ENCODE measurements at regions of chr3 and their contacts with region 1.

Region 1: DNA sequence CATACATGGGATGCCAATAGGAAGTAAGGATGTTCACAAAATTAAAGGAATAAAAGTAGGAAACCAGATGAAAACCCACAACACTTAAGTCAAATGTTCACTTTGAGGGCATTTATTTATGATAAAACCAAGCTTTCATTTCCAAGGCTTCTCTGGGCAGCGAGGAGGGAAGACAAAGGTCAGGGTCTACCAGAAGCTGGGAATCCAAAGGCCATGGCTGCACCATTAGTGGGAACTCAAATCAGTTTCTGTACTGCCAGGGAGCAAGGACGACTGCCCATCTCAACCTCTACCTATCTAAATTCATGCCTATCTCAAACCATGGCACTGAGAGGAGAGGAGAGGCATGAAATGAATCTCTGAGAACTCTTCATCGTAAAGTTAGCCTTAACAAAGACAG is 22.6 kb downstream of the PBRM1 start:
- DNase-seq: peak in 1 of 7 donors; percentile 40
- H3K4me3 ChIP-seq: no peak overlapping the region
- H3K27ac ChIP-seq: peak overlapping the region in 1 of 5 donors; percentile 11
- H3K4me1 ChIP-seq: peaks cover 5 to 8% of the 10 kb centered on the region in 2 donors
- H3K27me3 ChIP-seq: no peaks in the 10 kb centered on the region
- CTCF ChIP-seq: no peak
- POLR2A ChIP-seq: no peak

Region 2: DNA sequence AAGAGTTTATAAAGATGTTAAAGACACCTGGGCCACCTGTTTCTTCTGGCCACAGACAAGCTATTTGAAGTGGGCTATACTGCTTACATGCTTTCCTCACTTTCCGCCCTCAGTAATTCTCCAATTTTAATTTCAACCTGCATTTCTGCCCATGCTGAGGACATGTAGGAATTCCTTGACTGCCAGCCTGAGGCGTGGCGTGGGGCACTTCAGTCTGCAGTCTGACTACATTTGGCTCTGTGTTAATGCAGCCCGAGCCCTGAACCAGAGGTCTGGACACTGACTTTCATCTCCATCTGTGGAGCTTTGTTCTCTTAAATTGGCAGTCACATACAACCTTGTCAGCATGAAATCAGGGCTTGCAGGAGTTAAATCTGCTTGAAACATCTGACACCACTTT is 118.2 kb before region 1 on chr3:
- intact Hi-C with region 1: loop called in 1 of 2 experiments (anchors 10 kb)
- DNase-seq: peak in 1 of 7 donors; percentile 13
- H3K4me3 ChIP-seq: no peak overlapping the region
- H3K27ac ChIP-seq: peak overlapping the region in 2 of 5 donors; percentile 16 to 18
- H3K4me1 ChIP-seq: peaks cover 6 to 27% of the 10 kb centered on the region in 2 donors
- H3K27me3 ChIP-seq: no peaks in the 10 kb centered on the region
- CTCF ChIP-seq: no peak
- POLR2A ChIP-seq: no peak